Sciatic nerve (tissue), 2 donors: ENCODE measurements at regions of chr2 and their contacts with region 1.

Region 1: GRCh38 chr2:239433777-239434403 is 33.1 kb upstream of the HDAC4 start:
- DNase-seq: no peak
- ATAC-seq: no peak

Region 2: GRCh38 chr2:239533569-239534316 is 99.9 kb after region 1 on chr2:
- intact Hi-C with region 1: no loop called
- DNase-seq: peak; percentile 84
- ATAC-seq: peak; percentile 93

Region 3: DNA sequence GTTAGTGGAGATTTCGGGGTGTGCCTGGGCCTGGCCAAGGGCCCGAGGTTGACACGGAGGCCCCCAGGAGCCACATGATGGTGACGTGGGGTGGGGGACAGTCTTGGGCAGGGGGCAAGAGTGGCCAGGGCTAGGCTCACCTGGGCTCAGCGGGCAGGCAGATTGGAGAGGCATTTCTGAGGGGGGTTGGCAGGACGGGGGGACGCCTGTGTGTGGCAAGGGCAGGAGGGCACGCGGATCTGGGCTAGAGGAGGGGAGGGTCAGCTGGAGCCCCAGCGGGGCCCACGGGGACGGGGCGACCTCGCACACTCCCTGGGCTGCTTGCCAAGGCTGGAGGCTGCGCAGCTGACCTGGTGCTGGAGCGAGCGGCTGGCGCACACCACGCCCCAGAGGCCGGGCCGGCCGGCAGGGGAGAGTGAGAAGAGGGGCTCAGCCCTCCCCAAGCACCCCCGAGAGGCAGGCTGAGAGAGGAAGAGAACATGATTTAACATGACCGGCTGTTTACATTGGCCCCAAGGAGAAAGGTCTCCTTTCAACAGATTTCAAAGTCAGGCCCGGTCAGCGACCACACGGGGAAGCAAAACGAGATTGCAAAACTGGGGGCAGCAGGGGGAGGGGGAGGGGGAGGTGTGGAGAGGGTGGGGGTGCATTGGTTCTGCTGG is 1526.5 kb after region 1 on chr2:
- intact Hi-C with region 1: loop called (anchors 10 kb)
- DNase-seq: peak; percentile 86
- ATAC-seq: peak; percentile 70